Psoas muscle (tissue), 8 donors: ENCODE measurements at regions of chr5 and their contacts with region 1.

Region 1: GRCh38 chr5:17189381-17190036 is 27.9 kb upstream of the BASP1 start:
- DNase-seq: peak; percentile 63 to 76
- ATAC-seq: peak; percentile 53 to 74 (median 66)
- H3K4me3 ChIP-seq: no peak overlapping the region
- H3K27ac ChIP-seq: no peak overlapping the region
- H3K4me1 ChIP-seq: peaks cover 21% of the 10 kb centered on the region
- H3K27me3 ChIP-seq: no peaks in the 10 kb centered on the region
- CTCF ChIP-seq: peak; percentile 83

Region 2: DNA sequence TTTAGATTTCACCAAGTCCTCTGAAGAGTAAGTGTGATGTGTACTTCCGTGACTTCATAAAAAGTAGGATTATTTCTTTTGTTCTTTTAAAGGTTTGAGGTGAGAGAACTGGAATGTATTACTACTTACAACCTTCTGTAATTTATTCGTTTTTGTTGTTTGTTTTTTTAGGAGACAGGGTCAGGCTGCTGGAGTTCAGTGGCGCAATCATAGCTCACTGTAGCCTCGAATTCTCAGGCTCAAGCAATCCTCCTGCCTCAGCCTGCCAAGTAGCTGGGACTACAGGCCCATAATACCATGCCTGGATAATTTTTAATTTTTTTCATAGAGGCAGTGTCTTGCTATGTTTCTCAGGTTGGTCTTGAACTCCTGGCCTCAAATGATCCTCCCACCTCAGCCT is 504.4 kb before region 1 on chr5:
- intact Hi-C with region 1: loop called in 1 of 2 experiments (anchors 5 kb)
- DNase-seq: no peak
- ATAC-seq: no peak
- H3K4me3 ChIP-seq: no peak overlapping the region
- H3K27ac ChIP-seq: no peak overlapping the region
- H3K4me1 ChIP-seq: no peaks in the 10 kb centered on the region
- H3K27me3 ChIP-seq: no peaks in the 10 kb centered on the region
- CTCF ChIP-seq: no peak

Region 3: DNA sequence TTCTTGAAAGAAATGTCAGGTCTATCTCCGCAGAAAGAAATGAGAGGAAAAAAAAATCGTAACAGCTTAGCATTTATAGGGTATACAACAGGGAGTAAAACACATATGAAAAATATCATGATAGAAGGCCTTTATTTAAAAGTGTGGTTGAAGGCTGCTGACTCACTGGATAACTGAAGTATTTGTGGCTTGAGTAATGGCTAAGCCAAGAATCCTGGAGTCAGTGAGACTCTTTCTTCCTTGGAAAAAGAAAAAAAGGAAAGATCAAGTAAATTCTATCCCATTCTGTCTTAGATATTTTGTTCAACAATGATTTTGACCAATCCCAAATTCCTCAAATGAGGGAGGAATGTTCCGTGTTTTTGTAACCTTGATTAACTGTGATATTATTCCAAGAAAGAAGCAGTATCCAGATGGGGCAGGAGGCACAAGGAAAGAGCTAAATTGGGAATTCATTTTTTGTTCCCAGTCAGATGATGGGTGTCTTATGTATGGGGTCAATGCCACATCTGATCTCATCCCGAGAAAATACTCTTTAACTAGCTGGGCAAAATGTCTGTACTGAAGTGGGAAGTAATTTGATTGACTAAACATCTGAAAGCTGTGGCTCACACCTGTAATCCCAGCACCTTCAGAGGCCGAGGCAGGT is 189.1 kb before region 1 on chr5:
- intact Hi-C with region 1: no loop called
- DNase-seq: no peak
- ATAC-seq: peak in 1 of 4 donors; percentile 32
- H3K4me3 ChIP-seq: no peak overlapping the region
- H3K27ac ChIP-seq: peak overlapping the region; percentile 1
- H3K4me1 ChIP-seq: peaks cover 14% of the 10 kb centered on the region
- H3K27me3 ChIP-seq: no peaks in the 10 kb centered on the region
- CTCF ChIP-seq: no peak